ENCODE measurements at regions of chr16 and their contacts with region 1.

Region 1: GRCh38 chr16:21158208-21159110 is at the start of gene LDAF1:
- DNase-seq: peak; percentile 64 to 75
- ATAC-seq: peak; percentile 82
- H3K4me3 ChIP-seq: peak within 1 kb of the TSS; percentile 77 to 96 (median 86)
- H3K27ac ChIP-seq: peak within 1 kb of the TSS; percentile 81 to 95 (median 92)
- H3K4me1 ChIP-seq: peaks cover 35 to 59% of the 10 kb centered on the region in 2 donors
- H3K27me3 ChIP-seq: no peaks in the 10 kb centered on the region
- CTCF ChIP-seq: no peak
- POLR2A ChIP-seq: peak; percentile 52 to 67
- total RNA-seq, gene LDAF1: 19.4 to 70.0 (median 34.3) TPM

Region 2: DNA sequence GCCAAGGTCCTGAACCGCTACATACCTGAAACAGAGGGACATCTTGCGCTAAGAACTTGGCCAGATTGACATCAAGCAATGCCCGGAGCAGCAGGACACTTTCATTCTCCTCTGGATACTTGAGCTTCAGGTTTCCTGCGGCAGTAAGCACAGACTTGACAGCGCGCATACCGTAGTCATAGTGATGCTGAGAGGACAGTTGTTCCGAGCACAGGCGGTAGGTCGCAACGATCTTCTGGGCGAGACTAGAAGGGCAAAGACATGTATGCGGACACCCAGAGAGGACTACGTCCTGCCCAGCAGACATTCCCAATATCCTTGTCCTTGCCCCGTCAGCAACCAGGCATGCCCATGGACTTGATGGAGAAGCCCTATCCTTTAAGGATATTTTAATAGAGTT is 120.7 kb before region 1 on chr16:
- in situ Hi-C with region 1: no loop called
- intact Hi-C with region 1: no loop called
- DNase-seq: no peak
- ATAC-seq: no peak
- H3K4me3 ChIP-seq: no peak overlapping the region
- H3K27ac ChIP-seq: no peak overlapping the region
- H3K4me1 ChIP-seq: peaks cover 6 to 9% of the 10 kb centered on the region in 2 donors
- H3K27me3 ChIP-seq: no peaks in the 10 kb centered on the region
- CTCF ChIP-seq: no peak
- POLR2A ChIP-seq: no peak

Region 3: GRCh38 chr16:21300309-21301167 is 142.1 kb after region 1 on chr16:
- in situ Hi-C with region 1: loop called in 2 of 4 experiments (anchors 5 to 10 kb)
- intact Hi-C with region 1: loop called (anchors 1 kb)
- DNase-seq: peak; percentile 91 to 92
- ATAC-seq: peak; percentile 99 to 100
- H3K4me3 ChIP-seq: peak overlapping the region; percentile 63 to 72 (median 66)
- H3K27ac ChIP-seq: peak overlapping the region; percentile 48 to 70 (median 66)
- H3K4me1 ChIP-seq: no peaks in the 10 kb centered on the region
- H3K27me3 ChIP-seq: peaks cover 0 to 5% (median 0%) of the 10 kb centered on the region in 3 donors
- CTCF ChIP-seq: peak; percentile 53 to 80 (median 72)
- POLR2A ChIP-seq: peak; percentile 10 to 34

Region 4: DNA sequence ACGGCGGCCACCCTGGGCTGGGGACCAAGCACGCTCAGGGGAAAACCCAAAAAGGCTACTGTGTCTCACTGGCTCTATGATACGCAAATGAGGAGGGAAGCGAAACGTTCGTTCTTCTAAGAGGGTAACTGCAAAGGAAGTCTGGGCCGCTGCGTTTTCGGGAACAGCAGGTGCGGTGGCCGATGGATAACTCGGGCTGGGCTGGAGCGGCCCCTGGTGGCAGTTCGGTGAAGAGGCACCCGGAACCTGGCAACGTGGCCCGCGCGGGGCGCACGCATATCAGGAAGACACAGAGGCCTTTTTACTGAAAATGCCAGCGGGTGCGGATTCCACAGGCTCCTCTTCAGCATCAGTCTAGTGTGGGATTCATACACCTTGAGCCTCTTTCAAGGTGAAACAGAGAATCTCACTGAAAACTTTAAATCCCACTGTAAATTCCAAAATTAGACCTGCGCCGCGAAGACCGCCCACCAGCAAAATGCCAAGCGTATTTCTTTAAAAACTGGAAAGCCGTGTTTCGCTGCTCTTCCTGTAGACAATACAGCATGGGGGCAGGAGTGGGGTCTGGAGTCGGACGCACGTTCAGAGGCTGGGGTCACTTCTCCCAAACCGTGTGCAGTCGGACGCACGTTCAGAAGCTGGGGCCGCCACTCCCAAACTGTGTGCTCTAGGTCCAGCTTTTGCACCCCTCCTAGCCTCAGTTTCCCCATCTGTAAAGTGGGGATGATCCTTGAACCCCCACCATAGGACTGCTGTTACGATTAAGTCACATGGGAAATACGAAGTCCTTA is 396.5 kb after region 1 on chr16:
- in situ Hi-C with region 1: no loop called
- intact Hi-C with region 1: loop called (anchors 10 kb)
- DNase-seq: peak; percentile 80 to 88
- ATAC-seq: peak; percentile 48 to 64
- H3K4me3 ChIP-seq: peak overlapping the region in 3 of 4 donors; percentile 11 to 48 (median 41)
- H3K27ac ChIP-seq: peak overlapping the region; percentile 83 to 90 (median 88)
- H3K4me1 ChIP-seq: peaks cover 21 to 26% of the 10 kb centered on the region in 2 donors
- H3K27me3 ChIP-seq: no peaks in the 10 kb centered on the region
- CTCF ChIP-seq: peak; percentile 95 to 100 (median 98)
- POLR2A ChIP-seq: no peak

Measured in gastrocnemius medialis (tissue), 4 donors.